Endothelial cell of umbilical vein (primary cell): ENCODE measurements at regions of chr1 and their contacts with region 1.

Region 1: GRCh38 chr1:241531195-241532161 is 700 bp upstream of the KMO start:
- DNase-seq: peak; percentile 79
- H3K4me3 ChIP-seq: peak overlapping the region; percentile 35 to 93 (median 84)
- H3K27ac ChIP-seq: no peak overlapping the region
- H3K4me1 ChIP-seq: peaks cover 8% of the 10 kb centered on the region
- H3K27me3 ChIP-seq: peaks cover 22 to 57% of the 10 kb centered on the region in 2 experiments
- CTCF ChIP-seq: peak; percentile 31 to 34
- POLR2A ChIP-seq: no peak

Region 2: DNA sequence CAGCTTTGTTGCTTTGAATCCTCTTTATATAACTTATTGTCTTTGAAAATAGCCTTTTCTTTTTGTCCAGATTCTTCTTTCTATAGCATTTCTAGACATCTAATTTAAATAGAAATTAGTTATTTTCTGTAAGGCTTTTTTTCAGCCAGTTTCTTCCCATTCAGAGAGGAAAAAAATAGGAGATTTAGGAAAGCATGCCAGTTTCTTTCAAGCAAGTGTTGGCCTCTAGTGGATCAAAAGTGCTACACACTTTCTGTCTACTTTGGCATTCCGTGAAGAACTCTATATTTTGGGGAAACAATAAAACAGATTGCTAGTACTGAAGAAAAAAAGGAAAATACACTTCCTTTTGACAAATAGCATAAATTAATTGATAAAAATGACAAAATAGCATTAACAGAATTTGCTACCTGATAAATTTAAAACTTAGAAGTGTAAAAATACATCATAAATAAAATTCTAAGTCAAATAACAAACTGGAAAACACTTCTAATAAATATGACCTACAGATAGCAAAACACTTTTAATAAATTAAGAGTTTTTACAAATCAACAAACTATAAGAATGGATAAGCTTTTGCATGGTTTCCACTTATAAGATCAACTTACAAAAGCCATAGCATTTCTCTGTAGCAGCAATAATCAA is 303.4 kb after region 1 on chr1:
- CTCF ChIA-PET with region 1: no interaction called
- POLR2A ChIA-PET with region 1: no interaction called
- dilution Hi-C with region 1: no loop called
- intact Hi-C with region 1: loop called (anchors 1 kb)
- DNase-seq: peak; percentile 44
- H3K4me3 ChIP-seq: no peak overlapping the region
- H3K27ac ChIP-seq: no peak overlapping the region
- H3K4me1 ChIP-seq: peaks cover 18% of the 10 kb centered on the region
- H3K27me3 ChIP-seq: peaks cover 4 to 8% of the 10 kb centered on the region in 2 experiments
- CTCF ChIP-seq: peak; percentile 36 to 54
- POLR2A ChIP-seq: no peak

Region 3: GRCh38 chr1:241895013-241895412 is 363.5 kb after region 1 on chr1:
- CTCF ChIA-PET with region 1: no interaction called
- POLR2A ChIA-PET with region 1: no interaction called
- dilution Hi-C with region 1: no loop called
- intact Hi-C with region 1: loop called (anchors 5 kb)
- DNase-seq: no peak
- H3K4me3 ChIP-seq: no peak overlapping the region
- H3K27ac ChIP-seq: no peak overlapping the region
- H3K4me1 ChIP-seq: peaks cover 3% of the 10 kb centered on the region
- H3K27me3 ChIP-seq: no peaks in the 10 kb centered on the region
- CTCF ChIP-seq: no peak
- POLR2A ChIP-seq: no peak

Region 4: DNA sequence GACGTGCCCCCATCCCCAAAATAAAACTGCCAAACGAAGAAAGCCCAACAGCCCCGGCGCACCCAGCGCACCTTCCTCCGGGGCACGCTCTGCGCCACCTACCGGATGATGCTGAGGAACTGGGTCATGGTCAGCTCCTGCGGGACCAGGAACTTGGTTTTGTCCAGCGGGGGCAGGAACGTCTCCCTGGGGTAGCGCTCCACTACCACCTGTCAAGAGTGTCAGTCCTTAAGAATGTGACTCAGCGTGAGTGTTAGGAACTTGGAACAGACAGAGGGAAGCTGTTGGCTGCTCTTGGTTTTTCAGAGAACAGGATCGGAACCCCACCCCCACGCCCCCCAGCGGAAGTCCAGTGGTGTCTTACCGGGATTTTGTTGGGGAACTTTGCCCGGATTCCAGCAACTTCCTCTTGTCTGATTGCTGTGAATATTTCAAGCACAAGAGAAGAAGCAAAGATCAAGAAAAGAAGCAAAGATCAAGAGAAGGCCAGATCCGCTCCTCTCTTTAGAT is 467.0 kb after region 1 on chr1:
- CTCF ChIA-PET with region 1: interaction called, 3 read pairs
- POLR2A ChIA-PET with region 1: no interaction called
- dilution Hi-C with region 1: no loop called
- intact Hi-C with region 1: loop called (anchors 1 kb)
- DNase-seq: peak; percentile 48
- H3K4me3 ChIP-seq: peak overlapping the region in 2 of 3 experiments; percentile 22 to 53
- H3K27ac ChIP-seq: no peak overlapping the region
- H3K4me1 ChIP-seq: peaks cover 4% of the 10 kb centered on the region
- H3K27me3 ChIP-seq: no peaks in the 10 kb centered on the region
- CTCF ChIP-seq: peak; percentile 58 to 81
- POLR2A ChIP-seq: no peak